Posterior cingulate gyrus (tissue), 11 donors: ENCODE measurements at regions of chr17 and their contacts with region 1.

Region 1: GRCh38 chr17:48878918-48879898 is 13.4 kb upstream of the ATP5MC1 start:
- DNase-seq: peak in 4 of 10 donors; percentile 36 to 51 (median 44)

Region 2: GRCh38 chr17:48671697-48672171 is 207.5 kb before region 1 on chr17:
- intact Hi-C with region 1: loop called (anchors 2 kb)
- DNase-seq: peak; percentile 56 to 97 (median 84)

Region 3: GRCh38 chr17:48678141-48678971 is 200.9 kb before region 1 on chr17:
- intact Hi-C with region 1: loop called (anchors 2 kb)
- DNase-seq: peak; percentile 10 to 91 (median 56)

Region 4: GRCh38 chr17:48791128-48792032 is 87.8 kb before region 1 on chr17:
- intact Hi-C with region 1: no loop called
- DNase-seq: peak in 5 of 10 donors; percentile 19 to 61 (median 39)

Region 5: DNA sequence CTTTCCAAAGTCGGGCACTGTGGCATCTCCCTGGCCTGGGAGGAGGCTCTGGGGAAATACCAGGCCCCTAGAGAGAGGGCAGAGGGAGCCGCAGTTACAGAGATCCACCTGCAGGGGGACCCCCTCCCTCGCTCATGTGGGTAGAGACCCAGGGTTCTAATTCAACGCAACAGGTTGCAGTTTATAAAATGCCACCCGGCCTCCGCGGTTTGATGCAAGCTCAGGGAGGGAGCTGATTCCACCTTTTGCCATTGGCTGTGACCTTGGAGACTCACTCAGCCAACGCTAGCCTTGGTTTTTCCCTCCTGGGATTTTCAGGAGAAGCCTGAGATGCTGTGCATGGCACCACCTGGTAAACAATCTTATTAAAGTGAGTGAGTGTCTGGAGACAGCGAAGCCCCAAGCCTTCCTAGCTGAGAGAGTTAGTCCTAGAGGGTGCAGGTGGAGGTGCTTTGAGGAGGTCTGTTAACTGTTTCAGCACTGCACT is 74.2 kb before region 1 on chr17:
- intact Hi-C with region 1: loop called (anchors 2 kb)
- DNase-seq: peak; percentile 32 to 95 (median 70)

Region 6: DNA sequence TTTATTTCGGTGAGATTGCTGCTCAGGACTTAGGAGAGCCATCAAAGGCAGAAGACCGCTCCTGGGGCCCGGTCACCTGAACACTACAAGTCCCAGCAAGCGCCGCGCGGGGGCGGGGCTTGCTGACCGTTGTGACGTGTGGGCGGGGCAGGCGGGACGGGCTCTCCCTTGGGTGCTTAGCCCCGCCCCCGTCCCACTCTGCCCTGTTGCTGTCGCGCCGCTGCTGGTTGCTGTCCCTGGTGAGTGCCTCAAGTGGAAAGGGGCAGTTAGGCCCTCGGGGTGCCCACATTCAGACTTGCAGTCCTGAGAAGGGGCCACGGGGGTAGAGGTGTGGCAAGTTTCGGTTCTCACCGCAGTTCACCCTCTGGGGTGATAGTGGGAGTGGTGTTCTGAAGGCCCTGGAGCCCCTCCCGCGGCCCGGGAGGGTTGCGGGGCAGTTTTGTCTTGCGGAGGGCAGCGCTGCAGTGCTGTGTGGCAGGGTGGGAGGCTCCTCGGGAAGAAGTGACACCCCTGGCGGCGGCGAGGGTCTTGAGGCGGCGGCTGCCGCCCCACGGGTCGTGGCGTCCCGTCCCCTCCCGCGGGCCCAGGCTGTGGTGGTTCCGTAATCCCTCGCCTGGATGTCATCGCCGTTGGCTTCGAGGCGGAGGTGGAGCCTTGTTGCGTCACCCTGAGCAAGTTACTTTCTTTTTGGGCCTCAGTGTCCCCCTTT is 48.2 kb before region 1 on chr17 and contains the start of gene CALCOCO2:
- intact Hi-C with region 1: loop called (anchors 10 kb)
- DNase-seq: peak; percentile 86 to 99 (median 95)

Region 7: GRCh38 chr17:49031965-49032928 is 153.0 kb after region 1 on chr17:
- intact Hi-C with region 1: loop called (anchors 5 kb)
- DNase-seq: peak in 3 of 10 donors; percentile 19 to 37 (median 29)